Sigmoid colon (tissue), 7 donors: ENCODE measurements at regions of chr20 and their contacts with region 1.

Region 1: DNA sequence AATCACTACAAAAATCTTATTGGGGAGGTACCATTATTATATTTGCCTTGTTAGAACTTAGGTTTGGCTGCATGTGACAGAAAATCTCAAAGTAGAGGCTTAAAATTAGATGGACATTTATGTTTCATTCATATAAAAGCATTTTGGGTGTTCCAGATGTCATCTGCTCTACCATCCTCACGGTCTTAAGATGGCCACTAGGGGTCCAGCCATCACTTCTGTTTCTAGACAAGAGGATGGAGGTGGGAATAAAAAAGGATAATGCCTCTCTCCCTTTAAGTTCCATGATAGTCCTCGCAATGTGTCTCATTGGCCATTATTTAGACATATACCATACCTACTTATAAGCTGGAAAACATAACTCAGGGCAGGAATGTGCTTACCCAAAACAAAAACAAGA is 929.5 kb downstream of the KIF16B start:
- DNase-seq: no peak
- H3K4me3 ChIP-seq: no peak overlapping the region
- H3K27ac ChIP-seq: no peak overlapping the region
- H3K4me1 ChIP-seq: peaks cover 0 to 17% (median 5%) of the 10 kb centered on the region in 4 donors
- H3K27me3 ChIP-seq: no peaks in the 10 kb centered on the region
- CTCF ChIP-seq: no peak
- EP300 ChIP-seq: no peak
- POLR2A ChIP-seq: no peak

Region 2: DNA sequence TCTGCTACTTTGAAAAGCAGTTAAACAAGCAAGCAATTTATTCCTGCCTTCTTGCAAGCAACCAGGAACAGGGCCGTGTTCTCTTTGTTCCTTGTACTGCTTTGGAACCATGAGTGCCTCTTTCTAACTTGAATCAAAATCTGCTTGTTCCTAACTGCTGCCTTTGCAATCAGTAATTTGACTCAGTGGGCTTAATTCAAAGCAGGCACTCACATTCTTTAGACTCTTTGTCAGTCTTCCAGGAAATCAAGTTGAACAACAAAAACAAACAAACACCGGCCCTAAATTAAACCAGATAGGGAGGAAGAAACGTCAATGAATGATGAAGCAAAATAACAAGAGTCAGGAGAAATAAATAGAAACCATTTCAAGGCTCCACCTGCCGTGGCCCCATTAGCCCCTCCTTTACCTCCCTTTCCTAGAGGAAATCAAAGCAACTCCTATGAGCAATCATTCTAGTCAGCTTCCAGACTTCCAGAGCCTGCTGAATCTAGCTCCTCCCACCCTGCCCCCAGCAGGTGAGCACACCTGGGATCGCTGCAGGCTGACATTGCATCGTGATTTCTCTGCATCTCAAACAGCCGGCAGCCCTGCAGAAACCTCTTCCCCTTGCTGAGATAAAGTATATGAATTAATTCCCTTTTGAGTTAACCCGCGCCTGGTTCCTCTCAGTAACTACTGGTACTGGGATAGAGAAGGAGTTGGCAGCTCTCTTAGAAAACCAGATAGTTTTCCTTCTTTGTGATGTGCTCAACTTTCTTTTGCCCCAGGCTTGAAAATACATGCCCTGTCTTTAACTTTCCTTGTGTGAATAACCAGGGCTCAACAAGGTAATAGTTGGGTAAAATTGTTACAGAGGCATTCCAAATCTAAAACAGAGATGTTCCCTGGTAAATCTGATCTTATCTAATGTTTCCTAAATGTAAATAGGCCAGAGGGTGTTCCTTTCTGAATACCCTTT is 724.0 kb before region 1 on chr20:
- intact Hi-C with region 1: loop called (anchors 10 kb)
- DNase-seq: no peak
- H3K4me3 ChIP-seq: no peak overlapping the region
- H3K27ac ChIP-seq: peak overlapping the region in 1 of 4 donors; percentile 21
- H3K4me1 ChIP-seq: peaks cover 0 to 37% (median 32%) of the 10 kb centered on the region in 4 donors
- H3K27me3 ChIP-seq: no peaks in the 10 kb centered on the region
- CTCF ChIP-seq: no peak
- EP300 ChIP-seq: no peak
- POLR2A ChIP-seq: no peak

Region 3: GRCh38 chr20:15475483-15475882 is 168.2 kb before region 1 on chr20:
- intact Hi-C with region 1: no loop called
- DNase-seq: no peak
- H3K4me3 ChIP-seq: no peak overlapping the region
- H3K27ac ChIP-seq: no peak overlapping the region
- H3K4me1 ChIP-seq: peaks cover 0 to 6% (median 0%) of the 10 kb centered on the region in 4 donors
- H3K27me3 ChIP-seq: no peaks in the 10 kb centered on the region
- CTCF ChIP-seq: no peak
- EP300 ChIP-seq: no peak
- POLR2A ChIP-seq: no peak

Region 4: DNA sequence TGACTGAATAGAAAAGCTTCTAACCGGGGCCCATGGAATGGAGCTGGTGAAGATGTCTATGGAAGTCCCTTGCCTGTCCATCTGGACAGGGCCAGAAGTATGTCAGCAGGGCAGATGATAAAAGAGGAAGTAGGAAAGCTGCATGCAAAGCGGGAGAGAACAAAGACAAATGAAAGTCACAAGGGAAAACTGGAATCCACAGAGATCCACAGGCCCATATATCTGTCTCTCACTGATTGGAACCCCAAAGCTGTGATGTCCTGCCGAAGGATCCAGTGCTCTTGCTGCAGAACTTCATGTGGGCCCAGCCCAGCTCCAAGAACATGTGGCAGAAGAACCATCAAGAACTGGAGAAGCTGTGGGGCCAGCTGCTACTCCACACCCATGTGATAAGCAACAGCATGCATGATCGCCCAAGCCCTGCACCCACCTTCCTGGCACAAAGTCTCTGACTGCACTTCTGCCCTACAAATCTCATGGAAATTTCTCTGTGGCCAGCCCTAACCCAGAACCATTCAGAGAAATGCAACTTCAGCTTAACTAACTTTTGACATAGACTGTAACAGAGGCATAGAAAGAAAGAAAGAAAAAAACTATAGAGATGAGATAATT is 213.6 kb after region 1 on chr20:
- intact Hi-C with region 1: no loop called
- DNase-seq: no peak
- H3K4me3 ChIP-seq: no peak overlapping the region
- H3K27ac ChIP-seq: no peak overlapping the region
- H3K4me1 ChIP-seq: no peaks in the 10 kb centered on the region
- H3K27me3 ChIP-seq: no peaks in the 10 kb centered on the region
- CTCF ChIP-seq: no peak
- EP300 ChIP-seq: no peak
- POLR2A ChIP-seq: no peak